Activated naive CD4-positive, alpha-beta T cell treated with anti-CD3 and anti-CD28 coated beads for 36 hours (primary cell): ENCODE measurements at regions of chr9 and their contacts with region 1.

Region 1: GRCh38 chr9:93064392-93065134 is 6.1 kb downstream of the SUSD3 start:
- DNase-seq: peak; percentile 98
- H3K4me3 Mint-ChIP-seq: peak overlapping the region; percentile 86
- H3K27ac Mint-ChIP-seq: peak overlapping the region; percentile 99
- H3K4me1 Mint-ChIP-seq: peaks cover 91% of the 10 kb centered on the region
- H3K27me3 Mint-ChIP-seq: no peaks in the 10 kb centered on the region

Region 2: DNA sequence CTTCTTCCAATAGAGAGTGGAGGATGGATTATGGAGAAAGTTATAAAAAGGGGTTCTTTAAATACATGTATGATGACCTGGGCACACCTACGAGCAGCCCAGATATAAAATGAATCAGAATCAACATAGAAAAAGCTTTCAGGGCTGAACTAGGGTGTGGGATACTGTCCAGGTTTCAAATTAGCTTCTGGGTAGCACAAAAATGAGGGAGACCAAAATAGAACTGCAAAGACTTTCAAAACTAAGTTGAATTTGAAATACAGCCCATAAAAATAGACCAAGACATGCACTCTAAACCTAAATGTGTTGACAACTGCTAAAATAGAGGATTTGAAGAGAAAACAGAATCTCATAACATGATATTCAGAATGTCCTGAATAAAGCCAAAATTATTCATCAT is 203.7 kb before region 1 on chr9:
- CTCF ChIA-PET with region 1: no interaction called
- intact Hi-C with region 1: no loop called
- DNase-seq: no peak
- H3K4me3 Mint-ChIP-seq: no peak overlapping the region
- H3K27ac Mint-ChIP-seq: no peak overlapping the region
- H3K4me1 Mint-ChIP-seq: peaks cover 40% of the 10 kb centered on the region
- H3K27me3 Mint-ChIP-seq: no peaks in the 10 kb centered on the region

Region 3: GRCh38 chr9:92877531-92878430 is 186.8 kb before region 1 on chr9 and contains the start of gene ZNF484:
- CTCF ChIA-PET with region 1: no interaction called
- intact Hi-C with region 1: loop called (anchors 1 kb)
- DNase-seq: peak; percentile 99
- H3K4me3 Mint-ChIP-seq: peak within 1 kb of the TSS; percentile 87
- H3K27ac Mint-ChIP-seq: peak within 1 kb of the TSS; percentile 94
- H3K4me1 Mint-ChIP-seq: peaks cover 40% of the 10 kb centered on the region
- H3K27me3 Mint-ChIP-seq: no peaks in the 10 kb centered on the region
- total RNA-seq, gene ZNF484: 5.8 to 6.5 TPM

Region 4: DNA sequence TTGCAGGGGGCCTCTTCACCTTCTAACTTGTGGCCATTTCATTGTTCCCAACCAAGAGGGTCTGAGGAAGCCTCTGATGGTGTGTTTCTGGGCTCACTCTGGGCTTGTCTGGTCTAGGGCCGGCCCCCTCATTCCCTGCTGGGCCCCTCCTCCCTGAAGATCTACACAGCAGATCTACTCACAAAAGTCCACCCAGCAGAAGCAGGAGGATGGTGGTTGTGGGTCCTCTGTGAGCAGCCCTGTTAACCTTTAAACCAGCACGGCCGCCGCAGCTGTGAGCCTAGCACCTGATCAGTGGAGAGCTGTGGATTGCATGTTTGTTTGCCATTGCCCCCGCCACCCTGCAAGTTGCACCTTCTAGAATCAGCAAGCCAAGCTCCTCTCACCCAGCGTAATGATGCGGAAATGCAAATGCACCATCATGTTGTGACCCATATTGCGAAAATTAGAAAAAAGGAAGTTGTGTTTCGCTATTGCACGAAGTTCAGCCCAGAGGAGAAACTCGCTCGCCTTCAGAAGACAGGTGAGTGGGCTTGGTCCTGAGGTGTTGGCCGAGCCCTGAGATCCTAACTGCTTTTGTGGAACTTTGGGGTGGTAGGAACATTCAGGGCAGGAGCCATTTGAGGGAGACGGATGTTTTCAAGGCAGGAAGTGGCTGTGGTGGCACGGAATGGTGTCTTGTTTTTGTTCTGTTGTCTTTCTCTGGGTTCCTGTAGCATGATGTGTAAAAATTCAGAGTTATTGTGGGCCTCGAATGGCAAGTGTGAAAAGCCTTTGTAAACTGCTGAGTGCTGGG is 100.5 kb before region 1 on chr9:
- CTCF ChIA-PET with region 1: interaction called, 4 read pairs
- intact Hi-C with region 1: loop called (anchors 1 kb)
- DNase-seq: peak; percentile 86
- H3K4me3 Mint-ChIP-seq: peak overlapping the region; percentile 99
- H3K27ac Mint-ChIP-seq: peak overlapping the region; percentile 100
- H3K4me1 Mint-ChIP-seq: peaks cover 56% of the 10 kb centered on the region
- H3K27me3 Mint-ChIP-seq: no peaks in the 10 kb centered on the region

Region 5: DNA sequence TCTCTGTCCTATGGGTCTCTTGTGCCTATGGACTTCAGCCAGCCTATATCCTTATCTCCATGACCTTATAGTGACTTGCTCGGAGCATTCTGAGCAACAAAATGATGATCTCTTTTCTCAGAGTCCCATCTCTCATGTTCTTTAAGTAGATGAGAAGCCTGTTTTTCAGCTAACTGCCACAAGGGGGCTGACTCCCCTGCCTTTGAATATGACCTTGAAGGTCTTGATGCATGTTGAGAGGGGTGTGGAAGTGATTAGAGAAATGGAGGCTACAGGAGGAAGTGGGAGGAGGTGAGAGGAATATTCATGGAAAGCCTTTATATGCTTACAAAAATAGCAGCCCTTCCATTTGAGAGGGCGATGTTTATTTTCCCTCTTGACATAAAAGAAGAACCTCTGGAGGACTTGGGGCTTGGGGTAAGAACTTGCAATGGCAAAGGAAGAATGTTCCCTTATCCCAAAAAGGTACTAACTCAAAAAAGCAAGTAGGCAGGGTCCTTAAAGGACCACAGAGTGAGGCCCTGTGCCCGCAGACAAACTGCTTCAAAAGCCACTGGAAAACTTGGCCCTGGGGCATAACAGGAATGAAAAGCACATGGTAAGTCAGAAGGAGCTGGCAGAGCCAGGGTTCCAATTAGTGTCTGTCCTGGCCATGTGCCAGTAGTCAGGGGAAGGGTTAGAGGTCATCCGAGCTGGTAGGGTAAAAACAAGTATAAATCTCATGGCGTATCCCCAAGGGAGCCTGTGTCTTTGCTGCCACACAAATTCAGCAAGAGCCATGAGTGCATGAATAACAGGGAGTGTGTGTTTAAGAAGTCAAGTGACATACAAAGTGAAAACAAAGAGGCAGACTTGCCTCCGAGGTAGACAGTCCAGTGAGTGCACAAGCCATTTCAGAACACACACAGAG is 78.1 kb before region 1 on chr9:
- CTCF ChIA-PET with region 1: no interaction called
- intact Hi-C with region 1: loop called (anchors 1 kb)
- DNase-seq: peak; percentile 84
- H3K4me3 Mint-ChIP-seq: no peak overlapping the region
- H3K27ac Mint-ChIP-seq: peak overlapping the region; percentile 92
- H3K4me1 Mint-ChIP-seq: peaks cover 73% of the 10 kb centered on the region
- H3K27me3 Mint-ChIP-seq: no peaks in the 10 kb centered on the region

Region 6: GRCh38 chr9:93028448-93029006 is 36.0 kb before region 1 on chr9:
- CTCF ChIA-PET with region 1: interaction called, 5 read pairs
- intact Hi-C with region 1: loop called (anchors 1 kb)
- DNase-seq: peak; percentile 90
- H3K4me3 Mint-ChIP-seq: peak overlapping the region; percentile 55
- H3K27ac Mint-ChIP-seq: peak overlapping the region; percentile 97
- H3K4me1 Mint-ChIP-seq: peaks cover 87% of the 10 kb centered on the region
- H3K27me3 Mint-ChIP-seq: no peaks in the 10 kb centered on the region

Region 7: GRCh38 chr9:93134015-93134739 is 69.6 kb after region 1 on chr9 and contains the start of gene NINJ1:
- CTCF ChIA-PET with region 1: interaction called, 3 read pairs
- intact Hi-C with region 1: loop called (anchors 1 kb)
- DNase-seq: peak; percentile 96
- H3K4me3 Mint-ChIP-seq: peak within 1 kb of the TSS; percentile 94
- H3K27ac Mint-ChIP-seq: peak within 1 kb of the TSS; percentile 91
- H3K4me1 Mint-ChIP-seq: peaks cover 67% of the 10 kb centered on the region
- H3K27me3 Mint-ChIP-seq: no peaks in the 10 kb centered on the region
- total RNA-seq, gene NINJ1: 93.9 to 96.9 TPM